Activated T-helper 1 cell treated with anti-CD3 and anti-CD28 coated beads, Interleukin-12 subunit alpha, Interleukin-12 subunit beta, Interleukin-2, Interleukin-4 antibody, amounts not matched to agents 30 ng/mL and 10 ng/mL and 1 ng/mL, durations not matched to agents 14 hours and 24 hours and 36 hours (primary cell): ENCODE measurements at regions of chr3 and their contacts with region 1.

Region 1: GRCh38 chr3:184362668-184363540 is 1.4 kb downstream of the POLR2H start:
- DNase-seq: peak; percentile 96
- H3K4me3 Mint-ChIP-seq: peak overlapping the region; percentile 100
- H3K27ac Mint-ChIP-seq: peak overlapping the region; percentile 99
- H3K4me1 Mint-ChIP-seq: peaks cover 21% of the 10 kb centered on the region
- H3K27me3 Mint-ChIP-seq: peaks cover 10% of the 10 kb centered on the region

Region 2: GRCh38 chr3:184005941-184006507 is 356.9 kb before region 1 on chr3:
- intact Hi-C with region 1: no loop called
- DNase-seq: no peak
- H3K4me3 Mint-ChIP-seq: no peak overlapping the region
- H3K27ac Mint-ChIP-seq: no peak overlapping the region
- H3K4me1 Mint-ChIP-seq: peaks cover 9% of the 10 kb centered on the region
- H3K27me3 Mint-ChIP-seq: no peaks in the 10 kb centered on the region

Region 3: GRCh38 chr3:184017672-184018423 is 345.1 kb before region 1 on chr3 and contains the start of gene ABCC5:
- intact Hi-C with region 1: loop called (anchors 1 kb)
- DNase-seq: peak; percentile 78
- H3K4me3 Mint-ChIP-seq: peak within 1 kb of the TSS; percentile 99
- H3K27ac Mint-ChIP-seq: peak within 1 kb of the TSS; percentile 85
- H3K4me1 Mint-ChIP-seq: peaks cover 30% of the 10 kb centered on the region
- H3K27me3 Mint-ChIP-seq: peaks cover 23% of the 10 kb centered on the region
- total RNA-seq, gene ABCC5: 18.0 and 18.7 TPM in 2 replicates

Region 4: GRCh38 chr3:184185461-184186308 is 177.2 kb before region 1 on chr3 and contains the start of gene ABCF3:
- intact Hi-C with region 1: loop called (anchors 1 kb)
- DNase-seq: peak; percentile 99
- H3K4me3 Mint-ChIP-seq: peak within 1 kb of the TSS; percentile 98
- H3K27ac Mint-ChIP-seq: peak within 1 kb of the TSS; percentile 89
- H3K4me1 Mint-ChIP-seq: peaks cover 25% of the 10 kb centered on the region
- H3K27me3 Mint-ChIP-seq: no peaks in the 10 kb centered on the region
- total RNA-seq, gene ABCF3: 75.2 and 76.4 TPM in 2 replicates

Region 5: GRCh38 chr3:184335661-184336546 is 27.0 kb before region 1 on chr3:
- intact Hi-C with region 1: loop called (anchors 1 kb)
- DNase-seq: peak; percentile 84
- H3K4me3 Mint-ChIP-seq: peak overlapping the region; percentile 87
- H3K27ac Mint-ChIP-seq: peak overlapping the region; percentile 92
- H3K4me1 Mint-ChIP-seq: peaks cover 58% of the 10 kb centered on the region
- H3K27me3 Mint-ChIP-seq: peaks cover 2% of the 10 kb centered on the region

Region 6: DNA sequence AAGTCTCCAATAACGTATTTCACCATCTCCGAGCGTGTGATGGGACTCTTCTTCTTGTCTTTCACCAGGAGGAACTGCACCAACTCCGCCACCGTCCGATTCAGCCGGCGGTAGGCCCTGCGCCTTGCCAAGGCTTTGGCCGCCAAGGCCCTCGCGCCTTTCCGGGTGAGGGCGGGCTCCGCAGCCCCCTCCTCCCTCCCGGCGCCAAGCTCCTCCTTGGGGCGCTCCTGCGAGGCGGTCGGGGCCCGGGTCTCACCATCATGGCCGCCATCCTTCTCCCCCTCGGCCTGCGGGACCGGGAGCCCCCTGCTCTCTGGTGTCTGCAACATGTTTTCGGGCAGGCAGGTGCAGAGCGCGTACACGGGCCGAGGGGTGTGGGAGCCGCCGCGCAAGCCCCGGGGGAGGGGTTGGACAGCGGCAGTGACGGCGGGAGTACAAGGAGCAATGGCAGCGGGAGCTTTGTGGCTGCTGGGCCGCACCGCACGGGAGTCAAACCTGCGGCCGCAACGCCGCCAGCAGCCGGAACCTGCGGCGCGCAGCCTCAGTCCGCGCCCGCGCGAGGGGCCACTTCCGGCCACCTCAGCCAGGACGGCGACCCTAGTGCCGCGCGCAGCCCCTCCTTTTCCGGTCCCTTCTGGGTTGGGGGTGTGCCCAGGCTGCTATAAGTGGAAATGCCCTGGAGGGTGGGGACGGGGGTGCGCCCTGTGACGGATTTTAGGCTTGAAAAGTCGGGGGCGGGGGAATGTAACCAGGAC is 348.8 kb after region 1 on chr3 and contains the start of gene MAGEF1:
- intact Hi-C with region 1: loop called (anchors 5 kb)
- DNase-seq: peak; percentile 74
- H3K4me3 Mint-ChIP-seq: peak within 1 kb of the TSS; percentile 94
- H3K27ac Mint-ChIP-seq: peak within 1 kb of the TSS; percentile 77
- H3K4me1 Mint-ChIP-seq: peaks cover 37% of the 10 kb centered on the region
- H3K27me3 Mint-ChIP-seq: peaks cover 20% of the 10 kb centered on the region
- total RNA-seq, gene MAGEF1: 16.0 and 17.3 TPM in 2 replicates